ENCODE measurements at regions of chr4 and their contacts with region 1.

Region 1: DNA sequence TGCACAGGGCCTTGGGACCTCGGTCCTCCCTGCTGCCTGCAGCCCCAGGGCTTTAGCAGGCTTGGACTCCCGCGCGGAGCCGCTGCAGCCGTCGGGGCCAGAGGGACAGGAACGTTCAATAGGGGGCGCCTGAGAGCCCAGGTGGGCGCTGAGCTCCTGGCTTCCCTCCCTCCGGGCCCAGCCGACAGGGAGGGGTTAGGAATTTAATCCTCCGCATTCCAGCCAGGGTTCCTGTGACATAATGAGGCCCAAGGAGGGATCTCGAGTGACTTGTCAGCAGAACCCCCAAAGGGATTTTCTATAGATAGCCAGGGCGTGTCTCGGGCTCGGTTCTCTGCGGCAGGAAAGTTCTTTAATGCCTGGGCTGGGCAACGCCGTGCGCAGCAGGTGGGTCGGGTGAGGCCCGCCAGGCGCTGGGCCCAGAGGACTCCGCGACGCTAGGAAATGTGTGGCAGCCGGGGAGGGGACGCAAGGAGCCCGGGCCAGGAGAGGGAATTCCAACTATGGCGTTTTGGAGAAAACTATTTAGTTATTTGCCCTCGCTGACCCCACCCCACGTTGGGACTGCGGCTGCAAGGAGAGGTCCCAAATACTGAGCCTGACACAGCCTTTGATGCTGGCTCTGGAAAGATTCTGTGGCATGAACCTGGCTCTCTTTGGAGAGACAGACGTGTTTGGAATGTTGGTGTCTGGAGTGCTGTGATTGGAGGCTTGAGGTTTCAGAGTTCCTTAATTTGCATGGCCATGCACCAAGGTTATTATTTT is 285.2 kb upstream of the GATB start:
- DNase-seq: no peak

Region 2: GRCh38 chr4:150999086-150999485 is 1046.9 kb before region 1 on chr4:
- intact Hi-C with region 1: no loop called
- DNase-seq: no peak

Region 3: DNA sequence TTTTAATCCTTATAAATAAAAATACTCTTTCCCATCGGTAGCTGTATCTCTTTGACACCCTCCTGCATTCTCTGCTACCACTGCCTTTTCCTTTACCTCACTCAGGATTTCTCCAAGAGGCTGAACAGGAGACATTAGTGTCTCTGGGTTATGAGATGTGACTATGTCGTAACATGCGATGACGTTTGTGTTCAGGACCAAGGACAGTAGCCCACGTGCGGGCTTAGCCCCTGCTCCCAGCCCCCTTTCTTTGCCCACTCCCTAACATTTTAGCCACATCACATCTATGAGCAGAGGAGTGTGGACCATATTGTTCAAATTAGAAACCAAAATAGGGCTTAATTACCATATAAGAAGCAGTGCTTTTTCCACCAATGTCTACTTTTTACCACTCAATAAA is 120.6 kb after region 1 on chr4:
- intact Hi-C with region 1: loop called in 1 of 2 experiments (anchors 10 kb)
- DNase-seq: no peak

Region 4: DNA sequence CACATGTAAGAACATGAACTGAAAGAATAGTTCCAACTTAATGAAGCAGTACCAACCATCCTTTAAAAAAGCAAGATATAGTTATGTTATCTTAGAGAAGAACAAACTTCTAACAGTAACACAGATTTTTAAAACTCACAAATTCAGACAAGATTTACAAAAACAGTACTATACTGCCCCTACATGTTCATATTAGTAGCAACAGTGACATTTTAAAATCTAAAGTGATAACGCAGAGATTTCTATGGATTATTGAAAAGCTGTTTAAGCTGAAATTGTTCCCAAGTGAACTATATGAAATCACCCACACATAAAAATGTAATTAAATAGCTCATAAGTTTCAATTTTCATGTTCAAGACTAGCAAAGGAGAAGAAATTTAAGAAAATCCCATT is 323.9 kb after region 1 on chr4:
- intact Hi-C with region 1: loop called in 1 of 2 experiments (anchors 5 kb)
- DNase-seq: no peak